ENCODE measurements at regions of chr10 and their contacts with region 1.

Region 1: GRCh38 chr10:47311932-47312662 is 10.2 kb upstream of the GDF2 start:
- DNase-seq: peak; percentile 84 to 95 (median 89)
- ATAC-seq: peak; percentile 86 to 96 (median 90)
- H3K4me3 ChIP-seq: no peak overlapping the region
- H3K27ac ChIP-seq: peak overlapping the region in 2 of 4 donors; percentile 29 to 37
- H3K4me1 ChIP-seq: peaks cover 13 to 24% (median 22%) of the 10 kb centered on the region in 3 donors
- H3K27me3 ChIP-seq: no peaks in the 10 kb centered on the region
- CTCF ChIP-seq: peak; percentile 65 to 78 (median 72)

Region 2: DNA sequence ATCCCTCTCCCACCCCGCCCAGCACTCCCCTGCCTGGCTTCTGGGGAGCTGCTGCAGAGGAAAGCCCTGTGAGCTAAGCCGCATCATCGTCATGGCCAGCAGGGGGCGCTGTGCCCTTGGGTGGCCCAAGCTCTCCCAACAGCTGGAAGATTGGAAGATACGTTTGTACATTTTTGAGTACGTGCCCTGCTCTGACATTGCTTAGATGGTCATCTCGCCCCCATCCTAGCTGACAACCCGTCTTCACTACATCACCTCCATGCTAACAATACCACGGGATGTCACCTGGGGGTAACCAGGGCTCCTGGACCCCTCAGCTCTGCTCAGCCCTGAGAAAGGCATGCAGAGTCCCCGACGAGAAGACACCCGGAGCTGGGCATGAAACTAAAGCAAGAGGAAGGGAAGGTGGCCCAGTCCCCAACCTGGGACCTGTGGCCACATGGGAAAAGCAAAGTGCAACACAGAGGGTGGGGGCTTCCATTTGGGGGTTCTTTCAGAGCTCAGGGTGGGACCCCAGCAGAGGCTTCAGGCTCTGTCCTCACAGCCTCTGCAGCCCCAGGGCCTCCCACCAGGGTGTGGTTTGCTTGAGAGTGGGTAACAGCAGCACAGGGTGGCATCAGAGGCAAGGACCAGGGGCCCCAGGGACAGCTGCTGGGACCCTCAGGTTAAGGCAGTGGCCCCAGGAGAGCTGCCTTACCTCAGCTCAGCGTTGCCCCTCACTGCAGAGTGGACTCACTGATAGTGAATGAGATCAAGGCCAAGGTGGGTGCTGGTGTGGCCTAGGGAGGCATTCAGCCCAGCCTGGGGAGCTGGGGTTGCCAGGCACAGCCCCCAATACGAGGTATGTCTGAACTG is 264.2 kb before region 1 on chr10:
- intact Hi-C with region 1: loop called in 1 of 3 experiments (anchors 5 kb)
- DNase-seq: peak; percentile 57 to 96 (median 84)
- ATAC-seq: peak; percentile 72 to 97 (median 89)
- H3K4me3 ChIP-seq: no peak overlapping the region
- H3K27ac ChIP-seq: no peak overlapping the region
- H3K4me1 ChIP-seq: no peaks in the 10 kb centered on the region
- H3K27me3 ChIP-seq: no peaks in the 10 kb centered on the region
- CTCF ChIP-seq: peak; percentile 82 to 93 (median 90)